H1 (cell line): ENCODE measurements at regions of chr5 and their contacts with region 1.

Region 1: DNA sequence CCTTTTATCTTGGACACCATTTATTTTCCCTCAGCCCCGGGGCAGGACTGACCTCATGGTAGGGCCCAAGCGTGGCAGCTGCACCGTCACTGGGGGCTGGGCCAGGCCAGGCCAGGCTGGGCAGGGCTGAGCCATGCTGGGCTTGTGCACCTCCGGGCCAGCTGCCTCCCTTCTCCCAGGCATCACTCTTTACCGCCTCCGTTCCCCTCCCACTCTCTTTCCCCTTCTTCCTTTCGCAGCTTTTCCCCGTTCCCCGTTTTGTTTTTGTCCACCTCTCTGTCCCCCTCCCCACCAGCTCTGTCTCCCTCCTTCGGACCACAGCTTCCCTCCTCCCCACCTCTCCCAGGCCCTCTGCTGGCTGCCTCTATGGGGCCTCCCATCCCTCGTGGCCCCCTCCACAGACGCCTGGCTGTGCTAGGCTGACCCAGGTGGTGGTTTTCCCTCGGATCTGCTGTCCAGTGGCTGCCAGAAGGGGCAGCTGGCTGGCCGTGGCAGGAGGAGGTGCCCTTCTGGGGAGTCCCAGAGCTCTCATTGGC is 17.9 kb downstream of the FGF18 start:
- DNase-seq: no peak
- H3K4me3 ChIP-seq: peak overlapping the region in 1 of 4 experiments; percentile 1; a peak in 2 of 8 replicates
- H3K27ac ChIP-seq: no peak overlapping the region
- H3K4me1 ChIP-seq: peaks cover 0 to 38% (median 23%) of the 10 kb centered on the region in 4 experiments; a peak in 6 of 7 replicates
- H3K27me3 ChIP-seq: no peaks in the 10 kb centered on the region
- CTCF ChIP-seq: peak in 1 of 3 experiments; percentile 14; a peak in 1 of 4 replicates
- EP300 ChIP-seq: no peak
- POLR2A ChIP-seq: no peak
- RAD21 ChIP-seq: peak in 1 of 2 experiments; percentile 2; a peak in 2 of 4 replicates

Region 2: DNA sequence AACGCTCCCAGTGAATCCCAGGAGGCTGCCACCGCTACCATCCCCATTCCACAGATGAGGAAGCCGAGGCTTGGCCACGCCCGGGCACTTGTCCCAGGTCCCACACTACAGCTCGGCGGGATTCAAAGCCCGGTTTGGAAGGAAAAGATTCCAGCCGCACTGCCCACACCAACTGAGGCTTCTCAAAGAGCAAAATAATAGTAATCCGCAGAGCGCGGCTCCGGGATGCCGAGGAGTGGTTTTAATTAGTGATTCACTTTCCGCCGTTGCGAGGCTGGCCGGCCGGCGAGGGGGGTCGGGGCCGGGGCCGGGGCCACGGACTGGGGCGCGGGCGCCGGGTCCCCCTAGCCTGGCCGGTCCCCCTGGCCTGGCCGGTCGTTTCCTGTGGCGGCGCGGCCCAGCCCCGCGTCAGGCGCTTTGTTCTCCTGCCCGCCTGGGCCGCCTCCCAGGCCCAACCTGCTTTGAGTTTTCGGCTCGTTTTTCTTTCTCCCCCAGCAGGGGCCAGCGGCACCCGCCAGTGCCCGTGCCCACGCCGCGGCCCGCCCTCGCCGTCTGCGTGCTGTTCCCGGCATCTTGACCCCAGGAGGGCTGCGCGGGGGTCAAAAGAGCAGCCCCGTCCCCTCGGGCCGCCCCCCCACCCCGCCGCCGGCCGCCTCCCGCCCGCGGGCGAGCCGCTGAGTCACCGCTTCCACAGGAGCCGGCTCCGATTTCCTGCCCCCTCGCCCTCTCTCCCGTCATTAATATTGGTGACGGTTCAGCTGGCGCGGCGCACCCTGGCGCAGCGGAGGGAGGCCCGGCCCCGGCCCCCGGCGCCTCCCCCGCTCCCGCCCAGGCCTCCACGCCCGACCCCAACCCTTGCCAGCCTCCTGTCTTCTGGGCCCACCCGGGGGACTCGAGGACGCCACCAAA is 13.3 kb after region 1 on chr5:
- CTCF ChIA-PET with region 1: interaction called, 22 read pairs
- POLR2A ChIA-PET with region 1: interaction called, 8 read pairs
- DNase-seq: peak in 1 of 2 experiments; percentile 69
- H3K4me3 ChIP-seq: peak overlapping the region; percentile 5 to 58 (median 28); a peak in 6 of 8 replicates
- H3K27ac ChIP-seq: no peak overlapping the region
- H3K4me1 ChIP-seq: peaks cover 14 to 25% (median 20%) of the 10 kb centered on the region in 4 experiments
- H3K27me3 ChIP-seq: peaks cover 0 to 8% (median 6%) of the 10 kb centered on the region in 4 experiments; a peak in 4 of 7 replicates
- CTCF ChIP-seq: no peak
- EP300 ChIP-seq: no peak
- POLR2A ChIP-seq: 0 out of 3 replicates have a peak, but pooled peaks of 1 of the 2 experiments have one; percentile 18
- RAD21 ChIP-seq: no peak

Region 3: GRCh38 chr5:171477101-171477500 is 39.7 kb after region 1 on chr5:
- CTCF ChIA-PET with region 1: no interaction called
- POLR2A ChIA-PET with region 1: no interaction called
- DNase-seq: no peak
- H3K4me3 ChIP-seq: no peak overlapping the region
- H3K27ac ChIP-seq: no peak overlapping the region
- H3K4me1 ChIP-seq: peaks cover 0 to 4% (median 0%) of the 10 kb centered on the region in 4 experiments; a peak in 2 of 7 replicates
- H3K27me3 ChIP-seq: no peaks in the 10 kb centered on the region
- CTCF ChIP-seq: no peak
- EP300 ChIP-seq: no peak
- POLR2A ChIP-seq: no peak
- RAD21 ChIP-seq: no peak

Region 4: DNA sequence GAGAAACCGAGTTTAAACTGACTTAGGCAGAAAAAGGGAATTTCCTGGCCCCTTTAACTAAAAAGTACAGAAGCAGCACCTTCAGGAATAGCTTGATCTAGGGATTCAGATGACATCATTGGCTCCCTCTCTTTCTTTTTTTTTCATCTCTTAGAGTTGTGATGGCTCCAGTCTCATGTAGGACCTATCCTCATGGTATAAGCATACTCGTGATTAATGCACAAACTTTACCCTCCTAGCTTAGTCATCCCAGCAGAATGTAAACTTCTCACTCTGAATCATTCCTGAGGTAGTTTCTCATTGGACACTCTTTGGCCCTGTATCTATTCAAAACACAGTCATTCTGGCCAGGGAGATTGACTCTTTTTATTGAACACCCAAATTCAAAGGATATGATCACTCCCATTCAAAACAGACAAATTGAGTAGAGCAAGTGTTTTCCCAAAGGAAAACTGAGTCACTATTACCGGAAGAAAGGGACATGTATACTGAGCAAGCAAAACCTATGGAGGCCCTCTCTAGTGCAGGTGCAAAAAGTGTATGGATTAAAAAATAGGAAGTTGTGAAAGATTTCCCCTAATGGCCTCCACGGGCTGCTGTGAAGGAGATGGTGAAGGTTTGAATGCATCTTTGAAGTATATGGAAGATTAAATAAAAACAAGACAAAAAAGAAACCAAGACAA is 320.6 kb after region 1 on chr5:
- CTCF ChIA-PET with region 1: no interaction called
- POLR2A ChIA-PET with region 1: no interaction called
- DNase-seq: no peak
- H3K4me3 ChIP-seq: no peak overlapping the region
- H3K27ac ChIP-seq: no peak overlapping the region
- H3K4me1 ChIP-seq: no peaks in the 10 kb centered on the region
- H3K27me3 ChIP-seq: no peaks in the 10 kb centered on the region; a peak in 1 of 7 replicates
- CTCF ChIP-seq: no peak
- EP300 ChIP-seq: no peak
- POLR2A ChIP-seq: no peak
- RAD21 ChIP-seq: no peak